Motor neuron (in vitro differentiated cells): ENCODE measurements at regions of chr14 and their contacts with region 1.

Region 1: DNA sequence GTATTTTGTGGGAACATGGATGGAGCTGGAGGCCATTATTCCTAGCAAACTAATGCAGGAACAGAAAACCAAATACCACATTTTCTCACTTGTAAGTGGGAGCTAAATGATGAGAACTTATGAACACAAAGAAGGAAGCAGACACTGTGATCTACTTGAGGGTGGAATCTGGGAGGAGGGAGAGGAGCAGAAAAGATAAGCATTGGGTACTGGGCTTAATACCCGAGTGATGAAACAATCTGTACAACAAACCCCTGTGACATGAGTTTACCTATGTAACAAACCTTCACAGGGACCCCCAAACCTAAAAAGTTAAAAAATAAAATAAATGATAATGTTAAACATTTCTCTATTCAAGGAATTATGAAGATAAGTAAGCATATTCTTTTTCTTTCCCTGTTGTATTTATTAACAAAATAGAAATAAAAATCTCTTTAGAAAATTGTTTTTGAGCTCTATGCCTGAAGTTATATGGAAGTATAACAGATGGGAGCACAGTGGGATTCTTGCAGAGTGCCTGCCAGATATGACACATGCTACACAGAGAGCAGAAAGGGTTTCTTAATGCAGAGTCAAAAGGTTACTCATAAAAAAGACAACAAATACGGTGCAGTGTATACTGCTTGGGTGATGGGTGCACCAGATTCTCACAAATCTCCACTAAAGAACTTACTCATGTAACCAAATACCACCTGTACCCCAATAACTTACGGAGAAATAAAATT is 52.0 kb upstream of the SYNE2 start:
- ATAC-seq: no peak
- H3K4me3 ChIP-seq: no peak overlapping the region
- H3K27ac ChIP-seq: no peak overlapping the region
- H3K4me1 ChIP-seq: no peaks in the 10 kb centered on the region

Region 2: DNA sequence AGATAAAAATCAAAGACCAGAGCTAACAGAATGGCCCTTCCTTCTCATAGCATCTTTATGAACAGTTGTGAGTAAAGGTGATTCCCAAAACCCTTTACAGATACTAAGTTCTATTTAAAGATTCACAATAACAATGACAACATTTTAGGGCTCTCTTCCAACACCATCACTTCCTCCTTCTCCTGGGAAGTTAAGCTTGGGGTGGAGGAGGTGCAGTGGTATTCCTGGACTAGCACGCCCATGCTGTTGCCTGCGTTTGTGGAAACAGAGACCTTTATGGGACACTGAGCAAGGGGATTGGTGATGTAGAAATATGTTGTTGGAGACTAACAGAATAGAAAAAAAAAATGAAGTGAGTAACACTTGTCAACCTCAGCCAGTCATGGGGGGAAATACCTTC is 74.5 kb after region 1 on chr14:
- in situ Hi-C with region 1: no loop called
- ATAC-seq: no peak
- H3K4me3 ChIP-seq: no peak overlapping the region
- H3K27ac ChIP-seq: no peak overlapping the region
- H3K4me1 ChIP-seq: peaks cover 0 to 8% of the 10 kb centered on the region in 2 donors

Region 3: GRCh38 chr14:64005822-64006221 is 205.0 kb after region 1 on chr14:
- in situ Hi-C with region 1: loop called in 1 of 9 experiments (anchors 25 kb)
- ATAC-seq: no peak
- H3K4me3 ChIP-seq: no peak overlapping the region
- H3K27ac ChIP-seq: no peak overlapping the region
- H3K4me1 ChIP-seq: no peaks in the 10 kb centered on the region

Region 4: DNA sequence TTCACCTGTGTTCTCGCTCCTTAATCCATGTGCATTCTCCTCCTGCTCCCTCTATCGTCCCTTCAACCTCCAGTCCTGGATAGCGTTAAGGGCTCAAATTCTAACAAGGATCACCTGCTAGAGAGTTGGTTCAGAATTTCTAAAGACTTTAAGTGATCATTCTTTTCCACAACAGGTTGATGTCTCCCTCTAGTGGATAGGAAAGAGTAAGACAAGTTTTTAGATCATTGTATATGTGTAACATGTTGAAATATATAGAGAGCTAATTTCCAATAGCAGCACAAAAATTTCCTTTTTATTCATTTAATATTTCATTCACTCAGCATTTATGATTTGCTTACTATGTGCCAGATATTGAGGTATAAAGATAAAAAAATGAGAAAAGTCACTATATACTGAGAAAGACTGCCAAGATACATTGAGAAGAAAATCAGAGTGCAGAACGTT is 502.7 kb after region 1 on chr14:
- in situ Hi-C with region 1: loop called in 3 of 9 experiments (anchors 10 kb)
- ATAC-seq: peak; percentile 32 to 90 (median 65)
- H3K4me3 ChIP-seq: no peak overlapping the region
- H3K27ac ChIP-seq: no peak overlapping the region
- H3K4me1 ChIP-seq: no peaks in the 10 kb centered on the region